Breast epithelium (tissue), 4 donors: ENCODE measurements at regions of chr7 and their contacts with region 1.

Region 1: DNA sequence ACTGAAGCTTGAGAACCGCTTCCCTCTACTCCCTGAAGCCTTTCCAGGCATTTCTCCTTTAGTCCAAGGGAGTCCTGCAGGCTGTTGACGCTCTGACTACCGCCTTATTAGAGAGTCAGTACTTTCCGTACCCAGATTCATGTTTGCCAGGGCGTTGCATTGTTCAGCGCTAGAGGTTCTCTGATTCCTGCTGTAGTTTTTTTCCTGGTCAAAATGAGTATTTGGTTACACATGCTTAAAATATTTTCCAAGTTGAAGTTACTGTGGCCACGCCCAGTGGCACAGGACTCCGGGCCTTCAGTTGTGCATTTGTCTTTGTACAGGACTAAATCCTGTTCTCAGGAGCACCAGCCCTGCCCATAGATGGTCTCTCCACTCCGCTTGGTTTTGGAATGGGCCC is 7.9 kb downstream of the MTURN start:
- DNase-seq: peak in 1 of 2 donors; percentile 58
- H3K4me3 ChIP-seq: peak overlapping the region in 1 of 3 donors; percentile 12
- H3K27ac ChIP-seq: peak overlapping the region; percentile 33 to 59
- H3K4me1 ChIP-seq: peaks cover 0 to 12% of the 10 kb centered on the region in 2 donors
- H3K27me3 ChIP-seq: no peaks in the 10 kb centered on the region
- CTCF ChIP-seq: no peak
- POLR2A ChIP-seq: no peak

Region 2: GRCh38 chr7:29968683-29969395 is 173.9 kb before region 1 on chr7:
- intact Hi-C with region 1: loop called (anchors 5 kb)
- DNase-seq: no peak
- H3K4me3 ChIP-seq: no peak overlapping the region
- H3K27ac ChIP-seq: no peak overlapping the region
- H3K4me1 ChIP-seq: no peaks in the 10 kb centered on the region
- H3K27me3 ChIP-seq: no peaks in the 10 kb centered on the region
- CTCF ChIP-seq: no peak
- POLR2A ChIP-seq: no peak